ENCODE measurements at regions of chr17 and their contacts with region 1.

Region 1: GRCh38 chr17:45135192-45135977 is at the start of gene ACBD4:
- DNase-seq: peak; percentile 86
- H3K4me3 ChIP-seq: peak within 1 kb of the TSS; percentile 75
- CTCF ChIP-seq: peak; percentile 100

Region 2: GRCh38 chr17:44878627-44879221 is 256.7 kb before region 1 on chr17:
- CTCF ChIA-PET with region 1: interaction called, 14 read pairs
- POLR2A ChIA-PET with region 1: no interaction called
- DNase-seq: no peak
- H3K4me3 ChIP-seq: no peak overlapping the region
- CTCF ChIP-seq: peak; percentile 53

Region 3: GRCh38 chr17:44988044-44988942 is 147.1 kb before region 1 on chr17:
- CTCF ChIA-PET with region 1: no interaction called
- POLR2A ChIA-PET with region 1: no interaction called
- DNase-seq: no peak
- H3K4me3 ChIP-seq: no peak overlapping the region
- CTCF ChIP-seq: no peak

Region 4: DNA sequence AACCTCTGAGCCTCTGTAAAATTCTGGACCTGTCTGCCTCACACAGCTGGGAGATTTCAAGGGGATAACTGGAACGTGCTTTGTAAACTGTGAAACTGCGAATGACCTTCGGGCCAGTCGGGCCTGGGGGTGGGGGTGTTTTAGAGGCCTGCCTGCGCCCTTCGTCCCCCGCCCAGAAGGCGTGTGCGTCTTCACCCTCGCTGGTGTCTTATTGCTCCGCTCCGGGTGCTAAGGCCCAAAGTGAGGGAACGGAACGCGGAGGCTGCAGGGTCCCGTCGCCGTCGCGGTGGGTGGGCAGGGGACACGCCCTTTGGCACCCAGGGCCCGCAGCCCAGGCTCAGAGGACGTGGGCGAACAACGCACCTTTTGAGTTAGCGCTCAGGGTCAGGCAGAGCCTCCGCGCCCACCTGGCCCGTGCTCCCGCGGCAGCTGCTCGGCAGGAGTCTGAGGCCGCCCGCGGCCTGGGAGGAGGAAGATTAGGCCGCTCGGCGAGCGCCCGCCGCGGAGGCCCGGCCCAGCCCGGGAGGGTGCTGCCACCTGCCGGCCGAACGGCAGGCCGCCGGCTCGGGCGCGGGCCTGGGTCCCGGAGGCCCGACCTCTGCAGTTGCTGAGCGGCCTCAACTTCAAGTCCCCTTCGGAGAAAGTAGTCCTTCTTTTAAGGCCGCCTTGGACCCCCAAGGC is 113.6 kb before region 1 on chr17:
- CTCF ChIA-PET with region 1: interaction called, 15 read pairs
- POLR2A ChIA-PET with region 1: no interaction called
- DNase-seq: no peak
- H3K4me3 ChIP-seq: peak overlapping the region; percentile 53
- CTCF ChIP-seq: peak; percentile 64

Region 5: GRCh38 chr17:45098869-45099616 is 36.3 kb before region 1 on chr17:
- CTCF ChIA-PET with region 1: interaction called, 47 read pairs
- POLR2A ChIA-PET with region 1: interaction called, 3 read pairs
- DNase-seq: no peak
- H3K4me3 ChIP-seq: no peak overlapping the region
- CTCF ChIP-seq: peak; percentile 89

Region 6: DNA sequence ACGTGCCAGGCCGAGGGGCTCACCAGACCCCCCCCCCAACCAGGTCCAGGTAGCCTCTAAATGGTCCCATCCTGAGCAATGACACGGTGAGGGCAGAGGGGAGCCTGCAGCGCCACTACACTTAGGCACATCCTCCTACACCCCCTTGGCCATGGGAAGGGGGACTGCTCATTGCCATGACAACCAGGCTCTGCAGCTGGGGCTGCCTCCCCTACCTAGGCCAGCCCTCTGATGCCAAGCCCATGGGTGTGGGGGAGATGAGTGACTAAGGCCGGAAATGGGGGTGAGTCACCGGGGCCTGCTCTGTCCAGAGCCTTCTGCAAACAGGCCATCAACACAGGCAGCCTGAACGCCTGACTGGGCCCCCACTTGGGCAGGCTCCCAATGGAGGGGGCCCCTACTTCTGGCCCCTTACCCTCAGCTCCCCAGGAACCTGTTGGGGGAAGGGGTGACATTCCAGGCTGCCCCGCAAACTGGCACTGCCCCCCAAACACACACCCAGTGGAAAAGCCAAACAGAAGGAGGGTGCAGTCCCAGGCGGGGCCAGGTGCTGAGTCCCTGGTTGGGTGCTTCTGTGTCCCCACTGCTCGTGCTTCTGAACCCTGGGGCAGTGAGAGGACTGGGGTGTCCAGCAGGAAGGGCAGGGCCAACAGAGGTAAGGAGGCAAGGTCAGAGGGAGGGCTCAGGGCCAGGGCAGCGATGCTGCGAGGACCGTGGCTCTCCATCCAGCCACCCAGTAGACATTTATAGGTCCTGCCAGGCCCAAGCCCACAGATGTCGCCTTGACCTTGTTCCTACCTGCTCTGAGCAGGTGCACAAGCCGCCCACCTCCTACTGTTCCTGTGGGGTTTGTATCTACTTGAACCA is 11.2 kb before region 1 on chr17:
- CTCF ChIA-PET with region 1: interaction called, 74 read pairs
- POLR2A ChIA-PET with region 1: no interaction called
- DNase-seq: no peak
- H3K4me3 ChIP-seq: no peak overlapping the region
- CTCF ChIP-seq: no peak

Region 7: GRCh38 chr17:45197555-45198334 is 62.4 kb after region 1 on chr17:
- CTCF ChIA-PET with region 1: interaction called, 677 read pairs
- POLR2A ChIA-PET with region 1: interaction called, 14 read pairs
- DNase-seq: peak; percentile 10
- H3K4me3 ChIP-seq: peak overlapping the region; percentile 12; the same call in 1 of the 2 replicates
- CTCF ChIP-seq: peak; percentile 99

Region 8: DNA sequence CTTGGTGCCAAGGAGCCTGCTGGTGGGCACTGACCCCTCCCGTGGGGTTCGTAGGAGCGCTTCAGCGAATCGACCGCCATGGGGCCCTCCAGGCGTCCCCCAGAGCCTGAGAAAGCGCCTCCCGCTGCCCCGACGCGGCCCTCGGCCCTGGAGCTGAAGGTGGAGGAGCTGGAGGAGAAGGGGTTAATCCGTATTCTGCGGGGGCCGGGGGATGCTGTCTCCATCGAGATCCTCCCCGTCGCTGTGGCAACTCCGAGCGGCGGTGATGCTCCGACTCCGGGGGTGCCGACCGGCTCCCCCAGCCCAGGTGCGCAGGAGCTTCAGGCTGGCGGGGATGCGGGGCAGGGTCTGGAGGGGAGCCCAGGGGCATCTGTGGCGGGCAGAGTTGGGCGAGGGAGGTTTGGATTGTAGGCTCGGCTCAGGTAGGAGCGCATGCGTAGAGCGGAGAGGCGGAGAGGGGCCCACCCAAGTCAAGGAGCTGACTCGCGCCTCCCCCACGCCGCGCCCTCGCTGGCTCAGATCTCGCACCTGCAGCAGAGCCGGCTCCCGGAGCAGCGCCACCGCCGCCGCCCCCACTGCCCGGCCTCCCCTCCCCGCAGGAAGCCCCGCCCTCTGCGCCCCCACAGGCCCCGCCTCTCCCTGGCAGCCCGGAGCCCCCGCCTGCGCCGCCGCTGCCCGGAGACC is 106.1 kb after region 1 on chr17:
- CTCF ChIA-PET with region 1: interaction called, 37 read pairs
- POLR2A ChIA-PET with region 1: no interaction called
- DNase-seq: no peak
- H3K4me3 ChIP-seq: peak overlapping the region; percentile 6; the same call in 1 of the 2 replicates
- CTCF ChIP-seq: no peak

Measured in AG04449 (cell line).